ENCODE measurements at regions of chr7 and their contacts with region 1.

Region 1: GRCh38 chr7:45917658-45918057 is 3.4 kb downstream of the IGFBP3 start:
- DNase-seq: peak; percentile 85
- H3K4me3 Mint-ChIP-seq: no peak overlapping the region
- H3K27ac Mint-ChIP-seq: no peak overlapping the region
- H3K4me1 Mint-ChIP-seq: peaks cover 40% of the 10 kb centered on the region
- H3K27me3 Mint-ChIP-seq: peaks cover 58% of the 10 kb centered on the region

Region 2: GRCh38 chr7:45897042-45897690 is 20.5 kb before region 1 on chr7:
- CTCF ChIA-PET with region 1: interaction called, 11 read pairs
- DNase-seq: no peak
- H3K4me3 Mint-ChIP-seq: no peak overlapping the region
- H3K27ac Mint-ChIP-seq: no peak overlapping the region
- H3K4me1 Mint-ChIP-seq: no peaks in the 10 kb centered on the region
- H3K27me3 Mint-ChIP-seq: peaks cover 25% of the 10 kb centered on the region

Region 3: DNA sequence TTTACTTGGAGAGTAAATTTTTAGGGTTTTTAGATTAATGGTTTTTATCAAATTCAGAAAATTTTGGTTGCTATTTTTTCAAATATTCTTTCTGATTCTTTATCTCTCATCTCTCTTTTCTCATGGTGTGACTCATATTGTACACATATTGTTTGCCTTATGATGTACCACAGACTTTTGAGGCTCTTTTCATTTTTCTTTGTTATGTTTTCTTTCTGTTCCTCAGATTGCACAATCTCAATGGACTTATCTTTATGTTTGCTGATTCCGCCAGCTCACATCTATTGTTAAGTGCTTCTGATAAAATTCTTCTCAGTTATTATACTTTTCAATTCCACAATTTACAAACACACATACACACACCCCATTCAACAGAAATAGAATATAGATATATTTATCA is 171.6 kb after region 1 on chr7:
- CTCF ChIA-PET with region 1: no interaction called
- DNase-seq: no peak
- H3K4me3 Mint-ChIP-seq: no peak overlapping the region
- H3K27ac Mint-ChIP-seq: no peak overlapping the region
- H3K4me1 Mint-ChIP-seq: no peaks in the 10 kb centered on the region
- H3K27me3 Mint-ChIP-seq: no peaks in the 10 kb centered on the region

Region 4: DNA sequence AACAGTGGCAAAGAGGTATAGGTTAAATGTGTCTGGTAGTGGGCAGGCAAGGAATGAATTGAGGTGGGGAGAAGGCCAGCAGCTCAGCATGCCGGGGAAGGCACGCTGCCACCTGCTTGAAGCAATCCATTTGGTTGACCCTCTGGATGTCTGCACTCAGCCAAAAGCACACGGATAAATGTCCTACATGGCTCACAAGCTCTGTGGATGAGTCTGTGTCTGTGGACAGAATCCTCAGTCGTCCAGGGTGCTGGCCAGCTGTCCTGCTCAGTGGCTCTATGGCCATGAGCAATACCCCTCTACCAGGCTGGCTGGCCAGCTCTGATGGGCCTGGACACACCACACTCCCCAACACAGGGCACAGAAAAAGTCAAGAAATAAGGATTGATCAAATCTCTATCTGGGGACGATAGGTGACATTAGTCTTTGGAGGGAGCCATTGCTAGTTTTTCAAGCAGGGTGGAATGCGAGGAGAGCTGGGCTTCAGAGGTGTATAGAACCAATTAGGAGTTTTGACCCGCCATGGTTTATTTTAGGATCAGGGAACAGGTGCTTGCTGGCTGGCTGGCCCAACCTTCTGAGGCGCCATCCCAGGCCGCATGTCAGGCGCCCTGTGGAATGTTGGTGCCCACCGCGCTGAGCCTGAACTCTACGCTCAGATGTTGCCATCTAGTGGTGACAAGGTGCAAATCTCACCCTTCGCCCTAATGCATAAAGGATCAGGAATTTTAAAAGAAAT is 1170.8 kb after region 1 on chr7:
- CTCF ChIA-PET with region 1: interaction called, 84 read pairs
- DNase-seq: peak; percentile 39
- H3K4me3 Mint-ChIP-seq: no peak overlapping the region
- H3K27ac Mint-ChIP-seq: no peak overlapping the region
- H3K4me1 Mint-ChIP-seq: no peaks in the 10 kb centered on the region
- H3K27me3 Mint-ChIP-seq: no peaks in the 10 kb centered on the region